ENCODE measurements at regions of chr5 and their contacts with region 1.

Region 1: GRCh38 chr5:133240425-133241091 is 188.7 kb downstream of the HSPA4 start:
- DNase-seq: peak in 2 of 5 donors; percentile 35 to 40
- ATAC-seq: peak in 3 of 4 donors; percentile 36 to 83 (median 75)
- H3K4me3 ChIP-seq: no peak overlapping the region
- H3K27ac ChIP-seq: peak overlapping the region in 1 of 12 donors; percentile 42
- H3K4me1 ChIP-seq: peaks cover 0 to 14% (median 0%) of the 10 kb centered on the region in 12 donors
- H3K27me3 ChIP-seq: peaks cover 0 to 4% (median 0%) of the 10 kb centered on the region in 9 donors
- CTCF ChIP-seq: no peak
- POLR2A ChIP-seq: no peak

Region 2: GRCh38 chr5:131679913-131680312 is 1560.6 kb before region 1 on chr5:
- intact Hi-C with region 1: no loop called
- DNase-seq: no peak
- ATAC-seq: no peak
- H3K4me3 ChIP-seq: no peak overlapping the region
- H3K27ac ChIP-seq: peak overlapping the region in 1 of 12 donors; percentile 9
- H3K4me1 ChIP-seq: peaks cover 0 to 7% (median 0%) of the 10 kb centered on the region in 12 donors
- H3K27me3 ChIP-seq: no peaks in the 10 kb centered on the region
- CTCF ChIP-seq: no peak
- POLR2A ChIP-seq: no peak

Region 3: GRCh38 chr5:133123297-133123696 is 117.3 kb before region 1 on chr5:
- intact Hi-C with region 1: loop called in 1 of 10 experiments (anchors 10 kb)
- DNase-seq: no peak
- ATAC-seq: no peak
- H3K4me3 ChIP-seq: no peak overlapping the region
- H3K27ac ChIP-seq: no peak overlapping the region
- H3K4me1 ChIP-seq: no peaks in the 10 kb centered on the region
- H3K27me3 ChIP-seq: no peaks in the 10 kb centered on the region
- CTCF ChIP-seq: no peak
- POLR2A ChIP-seq: no peak

Region 4: DNA sequence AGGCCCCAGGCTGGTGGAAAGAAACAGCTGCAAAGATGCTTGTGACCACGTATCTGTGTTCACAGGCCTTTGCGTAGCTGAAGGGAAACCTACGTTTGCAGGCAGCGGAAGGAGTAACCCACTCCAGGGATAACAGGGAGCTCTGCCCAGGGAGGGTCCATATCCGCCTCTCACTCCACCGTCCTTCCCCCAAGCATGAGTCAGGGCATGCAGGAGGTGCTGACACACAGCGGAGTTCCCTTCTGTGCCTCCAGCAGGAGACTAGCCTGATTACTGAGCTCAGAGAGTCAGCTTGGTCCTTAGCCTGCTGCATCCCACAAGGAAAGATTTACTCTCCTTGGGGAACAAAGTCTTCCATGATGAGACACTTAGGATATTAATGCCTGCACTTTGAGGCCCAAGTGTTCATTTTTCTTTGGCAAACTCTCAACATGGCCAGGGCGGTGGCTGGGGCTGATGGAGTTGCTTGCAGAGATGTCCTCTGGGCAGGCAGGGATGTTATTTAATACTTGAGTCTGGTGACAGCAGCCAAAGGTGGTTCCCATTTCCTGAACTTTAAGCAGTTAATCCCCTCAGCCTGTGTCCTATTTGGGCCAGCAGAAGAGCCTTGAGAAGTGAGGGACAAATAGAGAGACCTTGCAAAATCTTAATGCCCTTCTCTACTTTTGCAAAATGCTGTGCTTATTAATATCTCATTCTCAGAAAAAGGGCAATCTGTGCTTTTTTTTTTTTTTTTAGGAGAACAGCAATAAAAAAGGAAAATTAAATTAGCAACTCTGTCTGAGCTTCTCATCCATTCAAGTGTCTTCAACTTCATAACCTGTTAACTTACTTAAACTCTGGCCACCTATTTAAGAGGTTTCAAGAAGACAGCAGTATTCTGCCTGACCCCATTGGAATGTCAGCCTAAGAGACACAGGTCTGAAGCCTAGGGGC is 33.4 kb after region 1 on chr5:
- intact Hi-C with region 1: no loop called
- DNase-seq: no peak
- ATAC-seq: peak in 2 of 4 donors; percentile 34 to 52
- H3K4me3 ChIP-seq: no peak overlapping the region
- H3K27ac ChIP-seq: no peak overlapping the region
- H3K4me1 ChIP-seq: no peaks in the 10 kb centered on the region
- H3K27me3 ChIP-seq: no peaks in the 10 kb centered on the region
- CTCF ChIP-seq: no peak
- POLR2A ChIP-seq: no peak

Measured in heart left ventricle (tissue), 16 donors.